ENCODE measurements at regions of chr1 and their contacts with region 1.

Region 1: GRCh38 chr1:111399792-111400610 is 27.5 kb downstream of the OVGP1 start:
- DNase-seq: peak in 1 of 2 donors; percentile 47
- ATAC-seq: no peak
- H3K4me3 ChIP-seq: no peak overlapping the region
- H3K27ac ChIP-seq: no peak overlapping the region
- H3K4me1 ChIP-seq: no peaks in the 10 kb centered on the region
- H3K27me3 ChIP-seq: peaks cover 0 to 12% (median 0%) of the 10 kb centered on the region in 7 donors
- CTCF ChIP-seq: peak; percentile 39 to 79 (median 71)

Region 2: DNA sequence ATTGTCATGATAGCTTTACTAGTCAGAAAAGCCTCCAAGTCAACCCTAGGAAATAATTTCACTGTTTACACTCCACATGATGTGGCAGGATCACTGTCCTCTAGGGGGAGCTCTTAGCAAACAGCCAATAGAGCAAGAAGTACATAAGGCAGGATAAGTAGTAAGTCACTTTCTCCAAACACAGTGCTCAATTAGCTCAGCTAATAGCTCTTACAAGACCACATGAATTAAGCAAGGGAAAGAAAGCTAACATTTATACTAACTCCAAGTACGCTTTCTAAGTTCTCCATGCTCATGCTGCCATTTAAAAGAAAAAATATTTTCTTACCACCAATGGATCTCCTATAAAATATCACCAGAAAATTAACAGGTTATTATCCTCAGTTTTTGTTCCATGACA is 369.4 kb before region 1 on chr1:
- intact Hi-C with region 1: loop called in 1 of 10 experiments (anchors 10 kb)
- DNase-seq: peak in 1 of 2 donors; percentile 10
- ATAC-seq: no peak
- H3K4me3 ChIP-seq: no peak overlapping the region
- H3K27ac ChIP-seq: no peak overlapping the region
- H3K4me1 ChIP-seq: no peaks in the 10 kb centered on the region
- H3K27me3 ChIP-seq: peaks cover 0 to 4% (median 0%) of the 10 kb centered on the region in 7 donors
- CTCF ChIP-seq: peak; percentile 18 to 87 (median 60)

Region 3: DNA sequence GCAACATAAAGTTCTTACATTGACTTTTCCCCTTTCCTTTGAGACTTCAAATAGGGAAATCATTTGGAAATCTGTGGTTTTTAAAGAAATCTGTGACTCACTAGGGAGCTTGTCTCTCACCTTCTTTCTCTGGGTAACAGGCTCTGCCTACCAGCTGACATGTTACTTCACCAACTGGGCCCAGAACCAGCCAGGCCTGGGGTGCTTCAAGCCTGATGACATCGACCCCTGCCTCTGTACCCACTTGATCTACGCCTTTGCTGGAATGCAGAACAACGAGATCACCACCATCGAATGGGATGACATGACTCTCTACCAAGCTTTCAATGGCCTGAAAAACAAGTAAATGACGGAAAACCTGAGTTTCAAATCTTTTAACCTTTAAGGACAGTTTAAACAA is 118.6 kb before region 1 on chr1:
- intact Hi-C with region 1: no loop called
- DNase-seq: no peak
- ATAC-seq: no peak
- H3K4me3 ChIP-seq: no peak overlapping the region
- H3K27ac ChIP-seq: no peak overlapping the region
- H3K4me1 ChIP-seq: no peaks in the 10 kb centered on the region
- H3K27me3 ChIP-seq: peaks cover 0 to 14% (median 0%) of the 10 kb centered on the region in 7 donors
- CTCF ChIP-seq: no peak